ENCODE measurements at regions of chr5 and their contacts with region 1.

Region 1: GRCh38 chr5:1930880-1931603 is 48.3 kb upstream of the IRX4 start:
- DNase-seq: peak; percentile 16 to 54
- ATAC-seq: peak; percentile 77 to 90 (median 82)
- H3K4me3 ChIP-seq: peak overlapping the region; percentile 10 to 68 (median 54)
- H3K27ac ChIP-seq: peak overlapping the region; percentile 53 to 86 (median 84)
- H3K4me1 ChIP-seq: peaks cover 0 to 15% (median 0%) of the 10 kb centered on the region in 9 donors
- H3K27me3 ChIP-seq: peaks cover 0 to 43% (median 21%) of the 10 kb centered on the region in 7 donors
- CTCF ChIP-seq: no peak

Region 2: GRCh38 chr5:1799602-1800471 is 131.2 kb before region 1 on chr5 and contains the start of gene MRPL36:
- intact Hi-C with region 1: loop called in 1 of 10 experiments (anchors 5 kb)
- DNase-seq: peak; percentile 94 to 96
- ATAC-seq: peak; percentile 86 to 96 (median 94)
- H3K4me3 ChIP-seq: peak within 1 kb of the TSS; percentile 75 to 100 (median 92)
- H3K27ac ChIP-seq: peak within 1 kb of the TSS; percentile 60 to 98 (median 92)
- H3K4me1 ChIP-seq: peaks cover 4 to 61% (median 39%) of the 10 kb centered on the region in 9 donors
- H3K27me3 ChIP-seq: no peaks in the 10 kb centered on the region
- CTCF ChIP-seq: peak in 1 of 9 donors; percentile 8
- total RNA-seq, gene MRPL36: 43.4 to 76.9 (median 49.8) TPM

Region 3: DNA sequence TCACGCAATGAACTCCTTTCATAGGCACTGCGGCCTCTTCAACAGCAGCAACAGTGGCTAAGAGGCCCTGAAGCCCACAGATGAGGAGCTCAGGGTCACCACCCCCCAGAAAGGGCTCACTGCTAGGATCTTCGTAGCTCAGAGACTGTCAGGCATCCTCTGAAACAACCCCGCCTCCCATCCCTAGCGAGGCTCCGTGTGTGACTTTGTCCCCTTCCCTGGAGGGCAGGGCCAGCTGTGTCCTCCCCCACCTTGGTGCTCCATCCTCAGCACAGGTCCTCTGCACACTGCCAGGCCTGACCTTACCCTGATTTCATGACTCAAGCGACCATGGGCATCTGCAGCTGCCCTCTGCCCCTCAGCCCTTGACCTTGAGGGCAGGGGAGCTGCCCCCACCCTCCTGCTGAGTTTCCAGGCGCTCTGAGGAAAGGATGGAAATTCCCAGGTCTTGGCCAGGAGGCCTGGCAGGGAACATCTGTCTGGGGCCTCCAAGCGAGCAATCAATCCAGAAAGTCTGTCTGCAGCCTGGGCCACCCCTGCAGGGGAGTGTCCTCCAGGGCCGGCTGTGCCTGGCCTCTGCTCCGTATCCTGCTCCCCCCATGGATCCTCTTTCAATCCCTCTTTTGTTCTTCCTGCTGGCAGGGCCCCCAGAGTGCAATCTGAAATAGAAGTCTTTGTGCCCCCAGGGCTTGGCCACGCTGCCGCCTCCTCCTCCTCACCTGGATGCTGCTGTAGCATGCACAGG is 41.5 kb before region 1 on chr5:
- intact Hi-C with region 1: loop called in 2 of 10 experiments (anchors 5 kb)
- DNase-seq: no peak
- ATAC-seq: no peak
- H3K4me3 ChIP-seq: no peak overlapping the region
- H3K27ac ChIP-seq: no peak overlapping the region
- H3K4me1 ChIP-seq: peaks cover 0 to 10% (median under 1%) of the 10 kb centered on the region in 9 donors
- H3K27me3 ChIP-seq: peaks cover 0 to 69% (median 56%) of the 10 kb centered on the region in 7 donors
- CTCF ChIP-seq: no peak